ENCODE measurements at regions of chr7 and their contacts with region 1.

Region 1: DNA sequence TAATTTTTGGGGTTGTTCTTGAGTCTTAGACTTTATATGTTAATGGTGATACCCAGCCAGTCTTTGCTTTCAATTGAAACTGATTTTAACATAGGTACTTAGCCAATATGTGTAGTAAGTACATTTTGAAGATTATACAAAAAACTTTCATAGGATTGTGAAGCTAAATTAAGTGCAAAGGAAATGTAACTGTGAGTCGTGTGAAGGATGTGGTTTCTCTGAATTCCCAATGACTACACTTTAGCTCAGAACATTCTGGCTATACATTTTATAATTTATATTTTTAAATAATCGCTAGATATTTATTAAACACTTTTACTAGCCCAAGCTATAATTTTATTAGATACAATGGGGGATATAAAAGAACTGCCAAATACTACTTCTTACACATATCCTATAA is 359.3 kb downstream of the PCLO start:
- DNase-seq: no peak
- ATAC-seq: no peak
- H3K4me3 ChIP-seq: no peak overlapping the region
- H3K27ac ChIP-seq: no peak overlapping the region
- H3K4me1 ChIP-seq: no peaks in the 10 kb centered on the region
- H3K27me3 ChIP-seq: no peaks in the 10 kb centered on the region

Region 2: DNA sequence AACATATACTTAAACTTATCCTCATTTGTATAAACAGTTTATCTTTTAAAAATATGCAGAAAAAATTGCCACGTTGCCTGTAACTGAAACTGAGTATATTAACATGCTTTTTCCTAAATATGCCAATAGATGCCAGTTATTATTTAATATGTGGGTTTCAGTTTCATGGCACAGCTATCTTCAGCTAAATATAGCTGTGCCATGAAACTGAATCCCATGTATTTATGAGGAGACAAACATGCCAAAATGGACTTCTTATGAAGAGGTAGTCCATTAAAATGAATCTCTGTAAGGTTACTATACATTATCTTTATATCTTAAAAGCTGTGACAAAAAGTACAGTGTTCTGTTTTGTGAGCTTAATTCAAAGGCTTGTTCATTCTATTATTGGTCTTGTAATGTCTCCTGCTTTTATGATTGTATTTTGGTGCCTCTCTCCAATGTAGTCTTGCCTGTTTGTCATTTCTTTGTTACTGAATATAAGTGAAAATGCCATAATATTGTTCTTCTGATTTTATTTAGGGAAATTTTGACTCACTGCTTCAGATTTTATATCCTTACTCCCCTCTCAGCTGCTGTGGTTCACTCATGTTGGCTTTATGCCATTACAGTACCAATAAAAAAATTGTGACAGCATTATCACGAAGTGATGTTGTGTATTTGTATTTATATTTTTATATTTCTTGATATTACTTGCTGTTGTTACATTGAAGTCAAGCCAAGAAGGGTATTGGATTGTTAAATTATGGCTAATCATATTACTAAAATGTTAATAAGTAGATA is 325.5 kb before region 1 on chr7:
- intact Hi-C with region 1: no loop called
- DNase-seq: no peak
- ATAC-seq: no peak
- H3K4me3 ChIP-seq: no peak overlapping the region
- H3K27ac ChIP-seq: no peak overlapping the region
- H3K4me1 ChIP-seq: no peaks in the 10 kb centered on the region
- H3K27me3 ChIP-seq: no peaks in the 10 kb centered on the region

Region 3: GRCh38 chr7:82740246-82740848 is 63.1 kb before region 1 on chr7:
- intact Hi-C with region 1: no loop called
- DNase-seq: no peak
- ATAC-seq: no peak
- H3K4me3 ChIP-seq: no peak overlapping the region
- H3K27ac ChIP-seq: no peak overlapping the region
- H3K4me1 ChIP-seq: no peaks in the 10 kb centered on the region
- H3K27me3 ChIP-seq: no peaks in the 10 kb centered on the region

Region 4: GRCh38 chr7:82841828-82842227 is 38.4 kb after region 1 on chr7:
- intact Hi-C with region 1: no loop called
- DNase-seq: no peak
- ATAC-seq: no peak
- H3K4me3 ChIP-seq: no peak overlapping the region
- H3K27ac ChIP-seq: no peak overlapping the region
- H3K4me1 ChIP-seq: no peaks in the 10 kb centered on the region
- H3K27me3 ChIP-seq: no peaks in the 10 kb centered on the region

Region 5: DNA sequence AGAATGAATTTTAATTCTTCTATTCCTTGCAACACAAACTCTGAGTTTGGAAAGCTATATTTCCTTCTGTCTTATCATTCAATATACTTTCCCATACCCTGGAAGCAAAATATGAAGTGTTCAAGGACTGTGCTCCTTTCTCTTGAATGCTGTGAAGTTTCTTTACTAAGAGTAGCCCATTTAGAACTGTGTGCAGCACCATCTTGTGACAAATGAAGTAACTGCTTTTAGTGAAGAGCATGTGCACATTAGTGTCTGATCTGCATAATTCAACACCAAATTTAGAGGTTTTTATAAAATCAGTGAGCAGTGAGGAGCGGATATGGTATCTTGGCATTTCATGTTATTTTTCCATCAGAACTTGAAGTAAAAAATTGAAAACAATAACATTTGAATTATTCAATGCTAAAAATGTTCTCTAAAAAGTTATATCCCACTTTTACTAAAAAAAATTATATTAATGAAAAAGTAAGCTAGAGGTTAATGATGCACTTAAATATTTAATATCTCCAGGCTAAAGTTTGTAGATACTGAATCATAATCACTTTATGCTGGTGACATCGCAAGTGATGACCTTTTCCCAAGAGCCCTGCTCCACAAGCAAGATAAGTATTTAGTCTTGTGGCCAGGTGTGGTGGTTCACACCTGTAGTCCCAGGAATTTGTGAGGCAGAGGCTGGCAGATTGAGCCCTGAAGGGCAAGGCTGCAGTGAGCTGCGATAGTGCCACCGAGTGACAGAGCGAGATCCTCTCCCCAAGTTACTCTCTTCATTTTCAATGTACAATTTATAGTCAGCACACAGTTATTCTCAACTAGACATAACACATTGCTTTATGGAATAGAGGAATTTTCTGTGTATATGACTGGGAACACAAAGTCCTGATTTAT is 468.0 kb after region 1 on chr7:
- intact Hi-C with region 1: loop called in 1 of 2 experiments (anchors 5 kb)
- DNase-seq: no peak
- ATAC-seq: no peak
- H3K4me3 ChIP-seq: no peak overlapping the region
- H3K27ac ChIP-seq: no peak overlapping the region
- H3K4me1 ChIP-seq: no peaks in the 10 kb centered on the region
- H3K27me3 ChIP-seq: no peaks in the 10 kb centered on the region

Measured in aorta (tissue), 5 donors.